Activated CD8-positive, alpha-beta T cell treated with anti-CD3 and anti-CD28 coated beads for 36 hours (primary cell): ENCODE measurements at regions of chr5 and their contacts with region 1.

Region 1: GRCh38 chr5:80255732-80256479 is at the start of gene SERINC5:
- DNase-seq: peak; percentile 88
- ATAC-seq: peak; percentile 80
- H3K4me3 Mint-ChIP-seq: peak within 1 kb of the TSS; percentile 97
- H3K27ac Mint-ChIP-seq: peak within 1 kb of the TSS; percentile 99
- H3K4me1 Mint-ChIP-seq: peaks cover 38% of the 10 kb centered on the region
- H3K27me3 Mint-ChIP-seq: no peaks in the 10 kb centered on the region
- CTCF ChIP-seq: no peak
- total RNA-seq, gene SERINC5: 32.4 to 33.1 TPM

Region 2: GRCh38 chr5:80125962-80126480 is 129.9 kb before region 1 on chr5:
- CTCF ChIA-PET with region 1: no interaction called
- POLR2A ChIA-PET with region 1: interaction called, 14 read pairs
- intact Hi-C with region 1: no loop called
- DNase-seq: peak; percentile 37
- ATAC-seq: peak; percentile 90
- H3K4me3 Mint-ChIP-seq: peak overlapping the region; percentile 11
- H3K27ac Mint-ChIP-seq: peak overlapping the region; percentile 78
- H3K4me1 Mint-ChIP-seq: peaks cover 55% of the 10 kb centered on the region
- H3K27me3 Mint-ChIP-seq: no peaks in the 10 kb centered on the region
- CTCF ChIP-seq: peak; percentile 36

Region 3: DNA sequence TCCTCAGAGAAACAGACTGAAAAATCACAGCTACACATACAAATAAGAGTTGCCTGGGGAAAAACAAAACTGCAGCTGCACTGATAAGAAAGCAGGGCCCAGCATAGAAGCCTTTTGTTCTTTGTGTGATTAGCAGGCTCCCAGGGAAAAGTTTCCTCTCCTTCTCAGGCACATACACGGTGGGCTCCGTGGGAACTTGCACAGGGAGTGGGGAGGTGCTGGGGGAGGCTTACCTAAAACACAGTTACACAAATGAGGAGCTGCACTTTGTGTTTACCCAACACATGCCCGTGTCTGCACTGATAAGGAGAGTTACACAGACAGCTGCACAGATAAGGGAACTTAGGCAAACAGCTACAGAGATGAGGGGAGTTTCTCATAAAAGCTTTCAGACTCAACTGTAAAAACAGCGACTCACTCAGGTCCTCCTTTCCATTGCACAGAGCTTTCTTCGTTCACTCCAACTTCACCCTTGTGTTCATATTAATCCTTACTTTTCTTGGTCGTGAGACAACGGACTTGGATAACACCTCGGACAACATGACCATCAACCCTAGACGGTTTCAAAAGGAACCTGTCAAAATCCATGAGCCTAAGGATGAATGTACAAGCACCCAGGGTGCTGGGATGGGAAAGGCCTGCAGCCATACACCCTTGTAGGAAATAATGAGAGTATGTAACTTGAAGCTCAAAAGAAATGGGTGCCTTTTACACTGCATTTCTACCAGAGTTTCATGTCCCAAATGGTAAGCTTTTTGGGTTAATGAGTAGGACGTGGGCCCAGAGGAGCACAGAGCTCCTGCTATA is 50.9 kb before region 1 on chr5:
- CTCF ChIA-PET with region 1: interaction called, 7 read pairs
- POLR2A ChIA-PET with region 1: interaction called, 30 read pairs
- intact Hi-C with region 1: no loop called
- DNase-seq: no peak
- ATAC-seq: peak; percentile 59
- H3K4me3 Mint-ChIP-seq: no peak overlapping the region
- H3K27ac Mint-ChIP-seq: peak overlapping the region; percentile 84
- H3K4me1 Mint-ChIP-seq: peaks cover 76% of the 10 kb centered on the region
- H3K27me3 Mint-ChIP-seq: no peaks in the 10 kb centered on the region
- CTCF ChIP-seq: no peak

Region 4: GRCh38 chr5:80216753-80217596 is 38.9 kb before region 1 on chr5:
- CTCF ChIA-PET with region 1: interaction called, 5 read pairs
- POLR2A ChIA-PET with region 1: interaction called, 50 read pairs
- intact Hi-C with region 1: loop called (anchors 5 kb)
- DNase-seq: peak; percentile 67
- ATAC-seq: peak; percentile 22
- H3K4me3 Mint-ChIP-seq: peak overlapping the region; percentile 60
- H3K27ac Mint-ChIP-seq: peak overlapping the region; percentile 91
- H3K4me1 Mint-ChIP-seq: peaks cover 85% of the 10 kb centered on the region
- H3K27me3 Mint-ChIP-seq: no peaks in the 10 kb centered on the region
- CTCF ChIP-seq: no peak

Region 5: DNA sequence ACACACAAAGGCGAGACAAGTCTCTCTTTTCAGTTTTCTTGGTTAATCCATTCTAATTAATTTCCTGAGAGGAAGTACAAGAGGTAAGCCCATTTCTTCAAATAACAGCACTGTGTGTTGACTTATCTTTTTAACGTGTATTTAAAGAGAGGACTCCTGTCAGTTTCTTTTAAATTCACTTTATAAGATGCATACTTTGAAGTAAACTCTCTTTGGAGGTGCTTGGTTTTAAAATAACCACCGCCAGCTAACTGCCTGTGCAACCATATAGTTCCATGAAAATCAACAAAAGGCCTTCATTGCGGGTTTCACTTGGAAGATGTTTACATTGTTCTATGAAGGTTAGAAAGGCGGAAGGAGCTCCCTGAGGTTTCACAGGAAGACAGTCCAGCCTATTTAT is 13.0 kb after region 1 on chr5:
- CTCF ChIA-PET with region 1: interaction called, 8 read pairs
- POLR2A ChIA-PET with region 1: interaction called, 16 read pairs
- intact Hi-C with region 1: no loop called
- DNase-seq: no peak
- ATAC-seq: no peak
- H3K4me3 Mint-ChIP-seq: peak overlapping the region; percentile 51
- H3K27ac Mint-ChIP-seq: peak overlapping the region; percentile 94
- H3K4me1 Mint-ChIP-seq: peaks cover 37% of the 10 kb centered on the region
- H3K27me3 Mint-ChIP-seq: no peaks in the 10 kb centered on the region
- CTCF ChIP-seq: no peak

Region 6: GRCh38 chr5:80308526-80308925 is 52.6 kb after region 1 on chr5:
- CTCF ChIA-PET with region 1: interaction called, 11 read pairs
- POLR2A ChIA-PET with region 1: no interaction called
- intact Hi-C with region 1: no loop called
- DNase-seq: no peak
- ATAC-seq: no peak
- H3K4me3 Mint-ChIP-seq: no peak overlapping the region
- H3K27ac Mint-ChIP-seq: no peak overlapping the region
- H3K4me1 Mint-ChIP-seq: no peaks in the 10 kb centered on the region
- H3K27me3 Mint-ChIP-seq: no peaks in the 10 kb centered on the region
- CTCF ChIP-seq: no peak